Activated naive CD4-positive, alpha-beta T cell treated with anti-CD3 and anti-CD28 coated beads for 36 hours (primary cell): ENCODE measurements at regions of chr9 and their contacts with region 1.

Region 1: DNA sequence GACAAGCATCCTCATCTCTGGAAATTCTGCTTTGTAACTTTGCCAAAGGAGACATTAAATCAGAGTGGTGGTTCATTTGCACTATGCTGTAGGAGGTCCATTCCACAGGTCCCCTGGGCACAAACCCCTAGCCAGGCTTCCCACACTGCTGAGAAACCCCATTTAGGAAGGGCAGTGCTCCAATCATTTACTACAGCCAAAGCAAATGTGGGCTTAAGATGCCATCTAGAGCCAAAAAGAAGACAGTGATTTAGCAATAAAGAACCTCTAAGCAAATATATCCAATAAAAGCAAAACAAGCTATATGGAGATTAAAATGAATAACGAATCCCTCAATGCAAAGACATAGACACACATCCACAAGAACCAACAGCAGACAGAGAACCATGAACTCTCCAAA is 129.0 kb upstream of the ALDH1B1 start:
- DNase-seq: no peak
- H3K4me3 Mint-ChIP-seq: no peak overlapping the region
- H3K27ac Mint-ChIP-seq: no peak overlapping the region
- H3K4me1 Mint-ChIP-seq: no peaks in the 10 kb centered on the region
- H3K27me3 Mint-ChIP-seq: peaks cover 14% of the 10 kb centered on the region

Region 2: GRCh38 chr9:38160613-38161215 is 102.8 kb before region 1 on chr9:
- CTCF ChIA-PET with region 1: no interaction called
- intact Hi-C with region 1: loop called (anchors 10 kb)
- DNase-seq: peak; percentile 79
- H3K4me3 Mint-ChIP-seq: no peak overlapping the region
- H3K27ac Mint-ChIP-seq: no peak overlapping the region
- H3K4me1 Mint-ChIP-seq: no peaks in the 10 kb centered on the region
- H3K27me3 Mint-ChIP-seq: no peaks in the 10 kb centered on the region